CD8-positive, alpha-beta memory T cell (primary cell): ENCODE measurements at regions of chr17 and their contacts with region 1.

Region 1: GRCh38 chr17:76623271-76624146 is 20.0 kb downstream of the ST6GALNAC1 start:
- DNase-seq: peak; percentile 64 to 83 (median 69)
- H3K4me3 ChIP-seq: no peak overlapping the region
- H3K4me3 Mint-ChIP-seq: no peak overlapping the region
- H3K27ac ChIP-seq: no peak overlapping the region
- H3K27ac Mint-ChIP-seq: peak overlapping the region in 1 of 8 donors; percentile 12
- H3K4me1 ChIP-seq: peaks cover 3% of the 10 kb centered on the region
- H3K4me1 Mint-ChIP-seq: peaks cover 0 to 6% (median 3%) of the 10 kb centered on the region in 3 donors
- H3K27me3 ChIP-seq: no peaks in the 10 kb centered on the region
- H3K27me3 Mint-ChIP-seq: peaks cover 1 to 11% of the 10 kb centered on the region in 2 donors

Region 2: DNA sequence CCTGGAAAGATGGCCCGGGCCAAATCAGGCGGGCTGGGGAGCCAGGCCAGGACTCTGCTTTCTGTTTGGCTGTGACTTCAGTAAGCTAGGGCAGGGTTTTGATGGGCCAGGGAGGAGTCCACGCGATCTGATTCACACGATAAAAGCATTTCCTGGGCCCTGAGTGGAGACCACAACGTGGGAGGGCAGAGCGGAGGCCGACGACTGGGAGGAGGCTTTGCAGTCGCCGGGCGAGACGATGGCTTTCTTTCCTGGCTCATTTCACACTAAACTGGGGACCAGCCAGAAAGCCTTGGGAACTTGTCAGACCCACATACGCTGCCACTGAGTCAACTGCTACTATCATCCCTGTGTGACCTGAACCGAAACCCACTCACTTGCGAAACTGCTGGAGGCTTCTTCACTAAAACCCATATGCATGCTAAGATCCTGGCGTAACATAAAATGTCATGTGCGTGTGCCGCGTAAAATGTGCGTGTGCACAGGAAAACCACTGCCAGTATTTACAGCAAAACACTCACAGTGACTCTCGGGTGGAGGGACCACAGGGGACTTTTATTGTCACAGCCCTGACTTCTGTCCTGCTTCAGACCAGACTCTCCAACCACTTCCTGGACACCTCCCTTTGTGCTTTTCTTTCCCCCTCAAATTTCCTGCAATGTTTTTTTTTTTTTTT is 108.1 kb before region 1 on chr17:
- CTCF ChIA-PET with region 1: interaction called, 90 read pairs
- POLR2A ChIA-PET with region 1: interaction called, 5 read pairs
- DNase-seq: peak; percentile 77 to 96 (median 92)
- H3K4me3 ChIP-seq: peak overlapping the region; percentile 2
- H3K4me3 Mint-ChIP-seq: peak overlapping the region; percentile 64 to 87 (median 78)
- H3K27ac ChIP-seq: peak overlapping the region; percentile 54
- H3K27ac Mint-ChIP-seq: peak overlapping the region; percentile 89 to 99 (median 97)
- H3K4me1 ChIP-seq: peaks cover 60% of the 10 kb centered on the region
- H3K4me1 Mint-ChIP-seq: peaks cover 51 to 81% (median 63%) of the 10 kb centered on the region in 3 donors
- H3K27me3 ChIP-seq: no peaks in the 10 kb centered on the region
- H3K27me3 Mint-ChIP-seq: peaks cover 0 to 7% of the 10 kb centered on the region in 2 donors

Region 3: DNA sequence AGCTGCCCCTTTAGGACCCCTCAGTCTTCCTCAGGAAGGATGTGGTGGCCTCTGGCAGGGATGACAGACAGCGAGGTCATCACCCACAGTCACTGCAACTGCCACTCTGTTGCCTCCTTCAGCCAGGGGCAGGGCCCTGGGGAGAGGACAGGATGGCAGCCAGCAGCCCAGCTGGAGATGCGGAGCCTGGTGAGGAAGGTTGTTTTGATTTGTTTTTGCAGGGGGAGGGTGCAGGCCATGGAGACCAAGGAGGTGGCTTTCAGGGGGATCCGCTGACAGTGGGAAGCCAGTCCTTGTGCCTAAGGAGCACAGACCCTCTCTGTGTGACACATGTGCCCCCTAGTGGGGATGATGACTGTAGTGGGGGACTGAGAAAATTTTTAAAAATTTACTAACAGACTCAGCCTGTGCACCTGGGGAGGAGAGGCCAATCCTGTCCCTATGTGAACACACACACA is 76.3 kb before region 1 on chr17:
- CTCF ChIA-PET with region 1: interaction called, 14 read pairs
- POLR2A ChIA-PET with region 1: no interaction called
- DNase-seq: peak; percentile 28 to 76 (median 55)
- H3K4me3 ChIP-seq: no peak overlapping the region
- H3K4me3 Mint-ChIP-seq: no peak overlapping the region
- H3K27ac ChIP-seq: no peak overlapping the region
- H3K27ac Mint-ChIP-seq: no peak overlapping the region
- H3K4me1 ChIP-seq: peaks cover 7% of the 10 kb centered on the region
- H3K4me1 Mint-ChIP-seq: peaks cover 0 to 2% (median 0%) of the 10 kb centered on the region in 3 donors
- H3K27me3 ChIP-seq: no peaks in the 10 kb centered on the region
- H3K27me3 Mint-ChIP-seq: peaks cover 5 to 11% of the 10 kb centered on the region in 2 donors

Region 4: GRCh38 chr17:76557368-76558197 is 65.9 kb before region 1 on chr17:
- CTCF ChIA-PET with region 1: interaction called, 55 read pairs
- POLR2A ChIA-PET with region 1: interaction called, 3 read pairs
- DNase-seq: peak; percentile 85 to 96 (median 93)
- H3K4me3 ChIP-seq: peak overlapping the region; percentile 76
- H3K4me3 Mint-ChIP-seq: peak overlapping the region; percentile 97 to 99 (median 99)
- H3K27ac ChIP-seq: peak overlapping the region; percentile 91
- H3K27ac Mint-ChIP-seq: peak overlapping the region; percentile 96 to 100 (median 99)
- H3K4me1 ChIP-seq: peaks cover 49% of the 10 kb centered on the region
- H3K4me1 Mint-ChIP-seq: peaks cover 63 to 71% (median 67%) of the 10 kb centered on the region in 3 donors
- H3K27me3 ChIP-seq: no peaks in the 10 kb centered on the region
- H3K27me3 Mint-ChIP-seq: no peaks in the 10 kb centered on the region

Region 5: DNA sequence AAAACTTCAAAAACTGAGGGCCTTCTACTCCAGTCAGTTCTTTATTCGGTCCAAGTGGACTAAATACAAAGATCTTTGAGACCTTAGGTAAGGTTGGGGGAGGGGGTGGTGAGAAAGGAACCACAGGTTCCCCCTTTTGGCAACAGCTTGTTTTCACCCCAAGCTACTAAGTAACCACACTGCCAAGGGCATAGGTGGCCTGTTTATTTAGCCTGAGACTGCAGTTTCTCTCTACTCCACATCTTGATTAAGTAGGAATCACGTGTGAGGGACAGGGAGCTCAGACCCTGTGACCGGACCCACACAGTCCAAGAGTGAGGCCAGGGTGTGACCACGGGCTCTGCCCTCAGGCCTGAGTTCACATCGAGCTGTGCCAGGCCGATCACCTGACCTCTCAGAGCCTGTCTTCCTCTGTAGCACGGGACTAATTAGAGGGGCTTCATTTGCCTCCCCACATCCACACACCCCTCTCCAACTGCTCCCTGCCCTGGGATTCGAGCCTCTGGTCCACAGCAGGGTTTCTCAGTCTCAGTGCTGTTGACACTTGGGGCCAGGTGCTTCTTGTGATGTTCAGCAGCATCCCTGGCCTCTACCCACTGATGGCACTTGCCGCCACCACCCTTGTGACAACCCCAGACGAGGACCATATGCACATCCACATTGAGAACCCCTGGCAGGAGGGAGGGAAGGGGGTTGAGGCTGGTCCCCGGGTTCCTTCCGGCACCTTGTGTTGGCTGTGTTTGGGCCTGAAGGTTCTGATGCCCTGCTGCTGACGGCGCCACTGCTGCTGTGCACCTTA is 55.7 kb before region 1 on chr17:
- CTCF ChIA-PET with region 1: interaction called, 55 read pairs
- POLR2A ChIA-PET with region 1: no interaction called
- DNase-seq: peak in 1 of 5 donors; percentile 21
- H3K4me3 ChIP-seq: no peak overlapping the region
- H3K4me3 Mint-ChIP-seq: peak overlapping the region in 5 of 7 donors; percentile 32 to 58 (median 52)
- H3K27ac ChIP-seq: no peak overlapping the region
- H3K27ac Mint-ChIP-seq: peak overlapping the region; percentile 63 to 93 (median 84)
- H3K4me1 ChIP-seq: peaks cover 12% of the 10 kb centered on the region
- H3K4me1 Mint-ChIP-seq: peaks cover 35 to 47% (median 41%) of the 10 kb centered on the region in 3 donors
- H3K27me3 ChIP-seq: no peaks in the 10 kb centered on the region
- H3K27me3 Mint-ChIP-seq: no peaks in the 10 kb centered on the region

Region 6: GRCh38 chr17:76585818-76586593 is 37.5 kb before region 1 on chr17 and contains the start of gene ST6GALNAC2:
- CTCF ChIA-PET with region 1: interaction called, 17 read pairs
- POLR2A ChIA-PET with region 1: interaction called, 3 read pairs
- DNase-seq: peak; percentile 18 to 74 (median 41)
- H3K4me3 ChIP-seq: peak within 1 kb of the TSS; percentile 39
- H3K4me3 Mint-ChIP-seq: peak within 1 kb of the TSS; percentile 67 to 88 (median 75)
- H3K27ac ChIP-seq: no peak within 1 kb of the TSS
- H3K27ac Mint-ChIP-seq: peak within 1 kb of the TSS in 2 of 8 donors; percentile 43 to 87
- H3K4me1 ChIP-seq: peaks cover 10% of the 10 kb centered on the region
- H3K4me1 Mint-ChIP-seq: peaks cover 0 to 24% (median 9%) of the 10 kb centered on the region in 3 donors
- H3K27me3 ChIP-seq: peaks cover 16% of the 10 kb centered on the region
- H3K27me3 Mint-ChIP-seq: peaks cover 43 to 48% of the 10 kb centered on the region in 2 donors
- total RNA-seq, gene ST6GALNAC2: 0.83 to 1.0 TPM

Region 7: GRCh38 chr17:76681222-76682137 is 58.0 kb after region 1 on chr17:
- CTCF ChIA-PET with region 1: interaction called, 21 read pairs
- POLR2A ChIA-PET with region 1: interaction called, 3 read pairs
- DNase-seq: peak; percentile 57 to 80 (median 62)
- H3K4me3 ChIP-seq: no peak overlapping the region
- H3K4me3 Mint-ChIP-seq: peak overlapping the region in 2 of 7 donors; percentile 61 to 85
- H3K27ac ChIP-seq: no peak overlapping the region
- H3K27ac Mint-ChIP-seq: peak overlapping the region in 7 of 8 donors; percentile 37 to 89 (median 66)
- H3K4me1 ChIP-seq: peaks cover 33% of the 10 kb centered on the region
- H3K4me1 Mint-ChIP-seq: peaks cover 15 to 18% (median 18%) of the 10 kb centered on the region in 3 donors
- H3K27me3 ChIP-seq: no peaks in the 10 kb centered on the region
- H3K27me3 Mint-ChIP-seq: no peaks in the 10 kb centered on the region

Region 8: DNA sequence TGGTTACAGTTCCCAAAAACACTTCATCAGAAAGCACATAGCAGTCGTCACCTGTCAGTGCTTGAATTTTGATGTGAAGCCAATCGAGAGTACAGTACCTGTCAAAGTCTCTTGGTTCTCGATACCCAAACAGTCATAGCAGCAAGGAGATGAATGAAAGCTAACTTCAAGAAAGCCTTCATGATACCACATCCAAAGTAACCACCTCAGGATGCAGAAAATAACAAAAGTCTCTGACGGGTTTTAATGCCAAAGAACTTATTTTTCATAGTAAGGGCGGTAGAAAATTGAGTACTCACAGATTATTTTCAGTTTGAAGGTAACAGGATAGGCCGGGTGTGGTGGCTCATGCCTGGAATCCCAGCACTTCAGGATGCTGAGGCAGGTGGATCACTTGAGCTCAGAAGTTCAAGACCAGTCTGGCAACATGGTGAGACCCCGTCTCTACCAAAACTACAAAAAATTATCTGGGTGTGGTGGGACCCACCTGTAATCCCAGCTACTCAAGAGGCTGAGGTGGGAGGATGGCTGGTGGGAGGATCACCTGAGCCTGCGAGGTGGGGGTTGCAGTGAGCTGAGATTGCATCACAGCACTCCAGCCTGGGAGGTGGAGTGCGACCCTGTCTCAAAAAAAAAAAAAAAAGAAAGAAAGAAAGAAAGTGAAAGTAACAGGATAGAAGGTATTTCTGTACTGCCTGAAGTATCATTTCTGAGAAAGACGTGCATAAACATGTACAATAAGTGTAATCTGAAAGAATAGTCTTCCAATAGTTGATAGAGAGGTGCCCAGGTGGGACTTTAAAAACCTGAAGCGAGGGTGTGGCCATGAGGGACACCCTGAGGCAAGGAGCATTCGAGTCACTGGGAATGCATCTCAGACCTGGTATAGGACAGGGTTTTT is 129.8 kb after region 1 on chr17:
- CTCF ChIA-PET with region 1: no interaction called
- POLR2A ChIA-PET with region 1: no interaction called
- DNase-seq: peak in 3 of 5 donors; percentile 60 to 87 (median 61)
- H3K4me3 ChIP-seq: peak overlapping the region; percentile 47
- H3K4me3 Mint-ChIP-seq: peak overlapping the region; percentile 81 to 95 (median 89)
- H3K27ac ChIP-seq: peak overlapping the region; percentile 67
- H3K27ac Mint-ChIP-seq: peak overlapping the region; percentile 72 to 98 (median 96)
- H3K4me1 ChIP-seq: peaks cover 27% of the 10 kb centered on the region
- H3K4me1 Mint-ChIP-seq: peaks cover 26 to 35% (median 28%) of the 10 kb centered on the region in 3 donors
- H3K27me3 ChIP-seq: no peaks in the 10 kb centered on the region
- H3K27me3 Mint-ChIP-seq: no peaks in the 10 kb centered on the region